CD8-positive, alpha-beta T cell (primary cell): ENCODE measurements at regions of chr5 and their contacts with region 1.

Region 1: GRCh38 chr5:134041570-134042411 is 37.0 kb upstream of the VDAC1 start:
- DNase-seq: peak in 1 of 9 experiments; percentile 45
- ATAC-seq: no peak
- H3K4me3 ChIP-seq: no peak overlapping the region
- H3K4me3 Mint-ChIP-seq: peak overlapping the region; percentile 60
- H3K27ac ChIP-seq: no peak overlapping the region
- H3K27ac Mint-ChIP-seq: peak overlapping the region; percentile 87
- H3K4me1 ChIP-seq: peaks cover 52% of the 10 kb centered on the region
- H3K4me1 Mint-ChIP-seq: peaks cover 61% of the 10 kb centered on the region
- H3K27me3 ChIP-seq: no peaks in the 10 kb centered on the region
- H3K27me3 Mint-ChIP-seq: no peaks in the 10 kb centered on the region
- CTCF ChIP-seq: no peak

Region 2: GRCh38 chr5:133996683-133997252 is 45.0 kb before region 1 on chr5:
- CTCF ChIA-PET with region 1: no interaction called
- POLR2A ChIA-PET with region 1: no interaction called
- intact Hi-C with region 1: no loop called
- DNase-seq: peak in 2 of 9 experiments; percentile 33 to 46
- ATAC-seq: peak; percentile 57
- H3K4me3 ChIP-seq: no peak overlapping the region
- H3K4me3 Mint-ChIP-seq: no peak overlapping the region
- H3K27ac ChIP-seq: no peak overlapping the region
- H3K27ac Mint-ChIP-seq: no peak overlapping the region
- H3K4me1 ChIP-seq: peaks cover 5% of the 10 kb centered on the region
- H3K4me1 Mint-ChIP-seq: peaks cover 68% of the 10 kb centered on the region
- H3K27me3 ChIP-seq: no peaks in the 10 kb centered on the region
- H3K27me3 Mint-ChIP-seq: no peaks in the 10 kb centered on the region
- CTCF ChIP-seq: peak; percentile 44

Region 3: GRCh38 chr5:134053840-134054338 is 12.1 kb after region 1 on chr5:
- CTCF ChIA-PET with region 1: interaction called, 33 read pairs
- POLR2A ChIA-PET with region 1: interaction called, 6 read pairs
- intact Hi-C with region 1: no loop called
- DNase-seq: peak in 1 of 9 experiments; percentile 56
- ATAC-seq: peak; percentile 82
- H3K4me3 ChIP-seq: no peak overlapping the region
- H3K4me3 Mint-ChIP-seq: peak overlapping the region; percentile 44
- H3K27ac ChIP-seq: no peak overlapping the region
- H3K27ac Mint-ChIP-seq: peak overlapping the region; percentile 87
- H3K4me1 ChIP-seq: peaks cover 49% of the 10 kb centered on the region
- H3K4me1 Mint-ChIP-seq: peaks cover 52% of the 10 kb centered on the region
- H3K27me3 ChIP-seq: no peaks in the 10 kb centered on the region
- H3K27me3 Mint-ChIP-seq: no peaks in the 10 kb centered on the region
- CTCF ChIP-seq: no peak

Region 4: GRCh38 chr5:134077926-134078580 is 36.3 kb after region 1 on chr5:
- CTCF ChIA-PET with region 1: interaction called, 45 read pairs
- POLR2A ChIA-PET with region 1: interaction called, 8 read pairs
- intact Hi-C with region 1: loop called in 1 of 2 experiments (anchors 5 kb)
- DNase-seq: peak in 3 of 9 experiments; percentile 41 to 52 (median 48)
- ATAC-seq: peak; percentile 27
- H3K4me3 ChIP-seq: no peak overlapping the region
- H3K4me3 Mint-ChIP-seq: peak overlapping the region; percentile 44
- H3K27ac ChIP-seq: no peak overlapping the region
- H3K27ac Mint-ChIP-seq: peak overlapping the region; percentile 97
- H3K4me1 ChIP-seq: peaks cover 76% of the 10 kb centered on the region
- H3K4me1 Mint-ChIP-seq: peaks cover 73% of the 10 kb centered on the region
- H3K27me3 ChIP-seq: no peaks in the 10 kb centered on the region
- H3K27me3 Mint-ChIP-seq: no peaks in the 10 kb centered on the region
- CTCF ChIP-seq: no peak

Region 5: DNA sequence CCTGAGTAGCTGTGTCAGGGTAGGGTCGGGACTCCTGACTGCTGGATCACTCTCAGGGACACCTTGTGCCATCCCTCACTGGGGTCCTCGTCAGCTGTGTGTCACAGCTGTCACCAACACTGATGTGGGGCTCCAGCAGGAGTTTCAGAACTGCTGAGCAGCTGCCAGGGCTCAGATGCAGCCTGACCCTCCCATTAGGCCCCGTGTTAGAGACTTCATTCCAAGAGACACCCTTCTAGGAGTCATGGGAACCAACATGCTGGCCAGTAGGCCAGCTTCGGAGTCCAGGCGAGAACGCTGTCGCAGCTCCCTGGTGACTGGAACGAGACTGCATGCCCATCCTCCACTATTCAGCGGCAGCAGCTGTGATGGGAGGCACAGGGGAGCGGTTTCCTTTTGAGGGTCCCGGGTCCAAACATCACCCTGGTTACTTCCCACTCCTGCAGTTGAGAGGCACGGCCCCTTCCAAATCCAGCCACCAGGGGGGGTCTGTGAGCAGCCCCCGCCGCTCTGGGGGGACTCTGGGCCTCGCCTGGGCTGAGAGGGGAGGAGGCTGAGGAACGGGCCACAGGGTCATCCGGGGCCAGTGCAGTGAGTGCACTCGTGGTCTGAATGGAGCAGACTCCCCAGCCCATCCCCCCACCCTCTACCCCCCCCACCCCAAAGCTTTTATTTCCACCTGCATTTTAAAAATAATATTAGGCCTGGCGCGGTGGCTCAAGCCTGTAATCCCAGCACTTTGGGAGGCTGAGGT is 60.1 kb after region 1 on chr5:
- CTCF ChIA-PET with region 1: no interaction called
- POLR2A ChIA-PET with region 1: interaction called, 9 read pairs
- intact Hi-C with region 1: loop called (anchors 1 to 2 kb)
- DNase-seq: peak; percentile 68 to 90 (median 79)
- ATAC-seq: peak; percentile 30
- H3K4me3 ChIP-seq: peak overlapping the region in 1 of 2 experiments; percentile 12
- H3K4me3 Mint-ChIP-seq: peak overlapping the region; percentile 22
- H3K27ac ChIP-seq: peak overlapping the region; percentile 24 to 28
- H3K27ac Mint-ChIP-seq: peak overlapping the region; percentile 96
- H3K4me1 ChIP-seq: peaks cover 93% of the 10 kb centered on the region
- H3K4me1 Mint-ChIP-seq: peaks cover 87% of the 10 kb centered on the region
- H3K27me3 ChIP-seq: no peaks in the 10 kb centered on the region
- H3K27me3 Mint-ChIP-seq: no peaks in the 10 kb centered on the region
- CTCF ChIP-seq: peak; percentile 84

Region 6: DNA sequence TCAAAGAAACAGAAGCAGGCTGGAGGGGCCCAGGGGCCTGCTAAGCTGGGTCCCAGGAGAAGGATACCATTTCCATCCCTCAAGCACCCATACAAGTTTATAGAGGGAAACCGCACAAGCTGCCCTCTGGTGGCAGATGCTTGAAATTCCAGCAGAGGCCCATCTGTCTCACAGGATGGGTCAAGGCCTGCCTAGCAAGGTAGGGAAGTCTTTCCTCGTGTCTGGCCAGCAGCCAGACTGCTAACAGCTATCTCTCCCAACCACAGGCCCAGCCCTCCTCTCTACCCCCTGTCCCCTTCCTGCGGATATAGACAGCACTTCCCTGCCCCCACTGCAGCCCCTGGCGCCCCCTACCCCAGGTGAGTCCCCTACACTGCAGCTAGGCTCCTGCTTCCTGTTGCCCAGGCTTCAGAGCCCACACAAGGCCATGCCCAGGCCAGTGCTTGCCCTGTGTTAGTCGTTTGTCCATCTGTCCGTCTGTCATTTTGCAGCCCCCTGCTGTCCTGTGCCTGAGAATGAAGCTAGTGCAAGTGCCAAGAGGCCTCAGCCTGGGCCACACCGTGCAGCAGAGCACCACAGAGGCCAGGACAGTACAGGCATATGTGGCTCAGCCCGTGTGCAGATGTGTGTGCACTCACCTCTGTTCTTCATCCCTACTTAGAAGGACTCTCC is 98.9 kb after region 1 on chr5:
- CTCF ChIA-PET with region 1: interaction called, 773 read pairs
- POLR2A ChIA-PET with region 1: interaction called, 185 read pairs
- intact Hi-C with region 1: loop called (anchors 1 kb)
- DNase-seq: peak in 7 of 9 experiments; percentile 3 to 83 (median 67)
- ATAC-seq: peak; percentile 39
- H3K4me3 ChIP-seq: no peak overlapping the region
- H3K4me3 Mint-ChIP-seq: peak overlapping the region; percentile 22
- H3K27ac ChIP-seq: peak overlapping the region; percentile 30 to 88
- H3K27ac Mint-ChIP-seq: peak overlapping the region; percentile 96
- H3K4me1 ChIP-seq: peaks cover 58% of the 10 kb centered on the region
- H3K4me1 Mint-ChIP-seq: peaks cover 80% of the 10 kb centered on the region
- H3K27me3 ChIP-seq: no peaks in the 10 kb centered on the region
- H3K27me3 Mint-ChIP-seq: no peaks in the 10 kb centered on the region
- CTCF ChIP-seq: peak; percentile 76

Region 7: DNA sequence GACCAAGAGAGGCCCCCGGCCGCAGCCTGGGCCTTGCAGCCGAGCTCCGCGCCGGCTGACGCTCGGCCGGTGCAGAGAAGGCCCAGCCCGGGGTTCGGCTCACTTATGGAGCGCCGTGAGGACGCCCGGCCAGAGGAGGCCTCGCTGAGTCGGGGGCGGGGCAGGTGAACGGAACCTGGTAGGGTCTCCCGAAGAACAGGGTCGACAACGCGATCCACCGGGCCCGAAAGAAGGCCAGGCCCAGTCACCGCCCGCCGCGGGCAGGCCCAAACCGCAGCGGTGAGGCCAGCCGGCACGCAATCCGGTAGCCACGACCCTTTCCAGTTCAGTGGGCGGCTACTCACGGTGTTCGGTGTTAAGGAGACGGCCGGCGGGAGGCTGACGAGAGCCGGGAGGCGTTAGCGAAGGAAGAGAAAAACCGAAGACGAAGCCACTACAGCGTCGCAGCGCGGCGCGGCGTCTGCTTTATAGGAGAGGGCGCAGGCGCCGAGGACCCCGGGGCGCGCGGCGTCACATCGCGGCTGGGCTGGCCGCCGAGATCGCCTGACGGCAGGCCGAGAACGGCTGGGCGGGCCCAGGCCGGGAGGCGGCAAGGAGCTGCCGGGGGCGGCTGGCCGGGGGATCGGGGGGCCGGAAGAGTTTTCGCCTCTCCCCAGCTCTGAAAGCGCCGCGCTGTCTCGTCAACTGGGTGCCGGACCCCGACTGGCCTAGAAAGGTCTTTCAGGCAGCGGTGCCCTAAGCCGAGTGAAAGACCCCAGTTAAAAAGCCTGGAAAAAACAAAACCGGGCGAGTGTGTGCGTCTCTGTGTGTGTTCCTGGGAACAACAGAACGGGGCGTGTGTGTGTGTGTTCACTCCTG is 134.9 kb after region 1 on chr5 and contains the start of gene SKP1:
- CTCF ChIA-PET with region 1: interaction called, 14 read pairs
- POLR2A ChIA-PET with region 1: interaction called, 15 read pairs
- intact Hi-C with region 1: no loop called
- DNase-seq: peak; percentile 79 to 93 (median 85)
- ATAC-seq: peak; percentile 88
- H3K4me3 ChIP-seq: peak within 1 kb of the TSS; percentile 98 to 99
- H3K4me3 Mint-ChIP-seq: peak within 1 kb of the TSS; percentile 98
- H3K27ac ChIP-seq: peak within 1 kb of the TSS; percentile 98
- H3K27ac Mint-ChIP-seq: peak within 1 kb of the TSS; percentile 99
- H3K4me1 ChIP-seq: peaks cover 31% of the 10 kb centered on the region
- H3K4me1 Mint-ChIP-seq: peaks cover 34% of the 10 kb centered on the region
- H3K27me3 ChIP-seq: no peaks in the 10 kb centered on the region
- H3K27me3 Mint-ChIP-seq: no peaks in the 10 kb centered on the region
- CTCF ChIP-seq: no peak
- total RNA-seq, gene SKP1: 290 to 301 TPM